Calu3 (cell line): ENCODE measurements at regions of chr18 and their contacts with region 1.

Region 1: DNA sequence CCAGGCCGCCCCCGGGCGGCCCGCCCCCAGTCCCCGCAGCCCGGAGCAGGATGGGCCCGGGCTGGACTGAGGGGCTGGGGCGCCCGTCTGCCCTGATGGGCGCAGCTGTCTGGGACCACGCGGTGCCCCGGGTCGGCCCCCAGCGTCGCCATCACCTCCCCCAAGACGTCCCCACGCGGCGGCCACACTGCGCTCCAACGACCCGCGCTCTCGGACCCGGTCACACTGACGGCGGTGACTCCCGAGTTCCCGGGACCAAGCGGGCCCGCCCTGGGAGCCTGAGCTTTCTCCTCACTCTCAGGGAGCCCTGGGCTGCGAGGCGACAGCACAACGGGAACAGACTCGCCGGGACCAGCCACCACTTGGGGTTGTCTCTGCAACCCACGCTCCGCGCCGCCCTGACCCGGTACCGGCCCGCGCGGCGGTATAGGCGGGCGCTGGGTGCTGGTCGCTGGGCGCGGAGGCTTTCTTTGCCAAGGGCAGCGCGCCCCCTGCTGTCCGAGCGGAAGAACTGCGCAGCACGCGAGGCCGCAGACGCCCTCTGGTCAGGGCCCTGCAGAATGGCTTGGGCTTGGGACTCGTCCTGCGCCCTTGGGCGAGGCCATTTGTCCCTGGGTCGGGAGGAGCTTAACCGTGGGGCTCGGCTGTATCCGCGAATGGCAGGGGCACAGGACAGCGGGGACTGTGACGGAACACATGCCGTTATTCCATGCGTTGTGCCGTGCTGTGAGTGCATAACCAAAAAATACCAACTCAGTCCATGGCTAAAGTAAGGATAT is 54.8 kb upstream of the ANKRD62 start:
- DNase-seq: peak; percentile 85
- H3K4me3 Mint-ChIP-seq: peak overlapping the region; percentile 79
- H3K27ac Mint-ChIP-seq: no peak overlapping the region
- H3K4me1 Mint-ChIP-seq: peaks cover 8% of the 10 kb centered on the region
- H3K27me3 Mint-ChIP-seq: peaks cover 23% of the 10 kb centered on the region
- CTCF ChIP-seq: peak; percentile 99

Region 2: GRCh38 chr18:11937874-11938478 is 100.9 kb before region 1 on chr18:
- CTCF ChIA-PET with region 1: interaction called, 20 read pairs
- intact Hi-C with region 1: loop called (anchors 1 kb)
- DNase-seq: peak; percentile 81
- H3K4me3 Mint-ChIP-seq: no peak overlapping the region
- H3K27ac Mint-ChIP-seq: no peak overlapping the region
- H3K4me1 Mint-ChIP-seq: peaks cover 6% of the 10 kb centered on the region
- H3K27me3 Mint-ChIP-seq: peaks cover 17% of the 10 kb centered on the region
- CTCF ChIP-seq: peak; percentile 66